ENCODE measurements at regions of chr17 and their contacts with region 1.

Region 1: DNA sequence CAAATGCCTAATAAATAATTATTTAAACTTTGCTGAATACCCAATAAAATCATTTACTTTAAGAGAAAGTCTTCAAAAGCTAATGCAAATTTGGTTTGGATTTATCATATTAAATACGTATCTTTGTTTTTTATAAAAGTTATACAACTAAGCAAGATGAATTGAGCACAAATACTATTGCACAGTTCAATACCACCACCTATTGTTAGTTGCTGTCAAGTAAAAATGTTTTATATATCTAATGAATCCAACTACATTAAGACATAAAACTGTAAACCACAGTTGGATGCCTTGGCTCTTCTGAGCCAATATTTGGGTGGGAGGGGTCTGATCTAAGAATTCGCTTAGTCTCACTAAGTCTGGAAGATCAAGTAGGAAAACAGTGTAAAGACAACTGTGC is 7.7 kb downstream of the FBXL20 start:
- DNase-seq: peak; percentile 1
- H3K4me3 ChIP-seq: no peak overlapping the region
- H3K27ac ChIP-seq: no peak overlapping the region
- H3K4me1 ChIP-seq: no peaks in the 10 kb centered on the region
- H3K27me3 ChIP-seq: no peaks in the 10 kb centered on the region
- CTCF ChIP-seq: no peak

Region 2: GRCh38 chr17:37483311-37484039 is 1910.3 kb before region 1 on chr17:
- CTCF ChIA-PET with region 1: no interaction called
- POLR2A ChIA-PET with region 1: interaction called, 13 read pairs
- intact Hi-C with region 1: no loop called
- DNase-seq: peak; percentile 8
- H3K4me3 ChIP-seq: no peak overlapping the region
- H3K27ac ChIP-seq: peak overlapping the region; percentile 47
- H3K4me1 ChIP-seq: peaks cover 27% of the 10 kb centered on the region
- H3K27me3 ChIP-seq: no peaks in the 10 kb centered on the region
- CTCF ChIP-seq: no peak

Measured in A673 (cell line).